CD8-positive, alpha-beta memory T cell (primary cell): ENCODE measurements at regions of chr10 and their contacts with region 1.

Region 1: DNA sequence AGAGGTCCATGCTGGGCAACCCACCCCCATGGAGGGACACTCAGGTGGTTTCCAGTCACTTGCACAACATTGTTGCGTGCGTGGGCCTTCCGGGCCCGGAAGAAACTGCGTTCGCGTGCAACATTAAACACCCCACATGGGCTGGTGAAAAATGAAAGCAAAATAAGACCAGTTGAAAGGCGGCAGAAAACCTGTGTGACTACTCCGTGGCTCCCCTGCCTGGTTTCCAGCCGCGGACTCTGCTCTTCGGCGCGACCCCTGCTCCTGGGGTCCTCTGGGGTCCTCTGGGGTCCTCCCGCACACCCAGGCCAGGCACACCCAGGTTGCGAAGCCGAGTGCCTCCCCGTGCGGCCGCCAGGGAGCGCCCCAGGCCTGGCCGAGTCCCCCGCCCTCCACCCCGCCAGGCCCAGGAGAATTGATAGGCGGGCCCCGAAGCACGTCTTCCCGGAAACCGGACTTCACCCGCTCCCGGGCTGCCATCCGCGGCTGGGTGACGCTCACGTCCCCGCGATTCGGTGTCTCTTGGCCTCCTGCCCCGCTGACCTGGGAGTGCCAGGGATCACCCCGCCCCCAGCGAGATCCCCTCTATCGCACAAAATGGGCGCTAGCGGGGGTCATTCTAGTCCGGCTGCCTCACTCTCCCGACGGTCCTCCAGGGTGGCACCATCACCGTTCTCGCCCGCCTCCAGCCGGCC is 1.9 kb upstream of the SH2D4B start:
- DNase-seq: peak; percentile 60 to 83 (median 71)
- H3K4me3 ChIP-seq: peak overlapping the region; percentile 33
- H3K4me3 Mint-ChIP-seq: peak overlapping the region; percentile 88 to 93 (median 91)
- H3K27ac ChIP-seq: peak overlapping the region; percentile 73
- H3K27ac Mint-ChIP-seq: peak overlapping the region; percentile 94 to 98 (median 98)
- H3K4me1 ChIP-seq: peaks cover 27% of the 10 kb centered on the region
- H3K4me1 Mint-ChIP-seq: peaks cover 28 to 40% (median 36%) of the 10 kb centered on the region in 3 donors
- H3K27me3 ChIP-seq: no peaks in the 10 kb centered on the region
- H3K27me3 Mint-ChIP-seq: no peaks in the 10 kb centered on the region

Region 2: DNA sequence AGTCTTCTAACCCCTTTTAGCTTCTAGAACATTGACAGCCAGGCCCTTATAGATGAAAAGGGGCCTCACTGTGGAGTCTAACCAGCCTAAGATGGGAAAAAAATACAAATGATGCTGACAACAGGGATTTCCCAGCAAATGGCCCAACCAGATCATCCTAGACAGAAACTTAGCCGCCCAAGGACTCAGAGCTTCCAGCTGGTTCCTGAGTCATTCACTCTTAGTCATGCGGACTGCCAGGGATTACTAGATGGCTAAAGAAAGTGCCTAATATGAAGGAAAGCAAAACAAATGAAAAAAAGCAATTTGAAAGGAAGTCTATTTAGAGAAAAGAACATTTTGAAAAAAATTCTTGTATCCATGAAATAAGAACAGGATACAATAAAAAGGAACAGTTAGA is 58.0 kb before region 1 on chr10:
- CTCF ChIA-PET with region 1: no interaction called
- POLR2A ChIA-PET with region 1: interaction called, 13 read pairs
- DNase-seq: no peak
- H3K4me3 ChIP-seq: no peak overlapping the region
- H3K4me3 Mint-ChIP-seq: peak overlapping the region in 2 of 7 donors; percentile 14 to 37
- H3K27ac ChIP-seq: no peak overlapping the region
- H3K27ac Mint-ChIP-seq: peak overlapping the region in 7 of 8 donors; percentile 48 to 91 (median 64)
- H3K4me1 ChIP-seq: peaks cover 51% of the 10 kb centered on the region
- H3K4me1 Mint-ChIP-seq: peaks cover 65 to 83% (median 83%) of the 10 kb centered on the region in 3 donors
- H3K27me3 ChIP-seq: no peaks in the 10 kb centered on the region
- H3K27me3 Mint-ChIP-seq: no peaks in the 10 kb centered on the region

Region 3: GRCh38 chr10:80609331-80609730 is 73.5 kb after region 1 on chr10:
- CTCF ChIA-PET with region 1: no interaction called
- POLR2A ChIA-PET with region 1: no interaction called
- DNase-seq: no peak
- H3K4me3 ChIP-seq: no peak overlapping the region
- H3K4me3 Mint-ChIP-seq: no peak overlapping the region
- H3K27ac ChIP-seq: no peak overlapping the region
- H3K27ac Mint-ChIP-seq: no peak overlapping the region
- H3K4me1 ChIP-seq: no peaks in the 10 kb centered on the region
- H3K4me1 Mint-ChIP-seq: no peaks in the 10 kb centered on the region
- H3K27me3 ChIP-seq: no peaks in the 10 kb centered on the region
- H3K27me3 Mint-ChIP-seq: peaks cover 6 to 16% of the 10 kb centered on the region in 2 donors